OCI-LY7 (cell line): ENCODE measurements at regions of chrX and their contacts with region 1.

Region 1: GRCh38 chrX:2643880-2644279 is 47.2 kb upstream of the CD99 start:
- DNase-seq: no peak
- H3K4me3 ChIP-seq: no peak overlapping the region
- H3K27ac ChIP-seq: no peak overlapping the region
- H3K4me1 ChIP-seq: no peaks in the 10 kb centered on the region
- CTCF ChIP-seq: no peak

Region 2: DNA sequence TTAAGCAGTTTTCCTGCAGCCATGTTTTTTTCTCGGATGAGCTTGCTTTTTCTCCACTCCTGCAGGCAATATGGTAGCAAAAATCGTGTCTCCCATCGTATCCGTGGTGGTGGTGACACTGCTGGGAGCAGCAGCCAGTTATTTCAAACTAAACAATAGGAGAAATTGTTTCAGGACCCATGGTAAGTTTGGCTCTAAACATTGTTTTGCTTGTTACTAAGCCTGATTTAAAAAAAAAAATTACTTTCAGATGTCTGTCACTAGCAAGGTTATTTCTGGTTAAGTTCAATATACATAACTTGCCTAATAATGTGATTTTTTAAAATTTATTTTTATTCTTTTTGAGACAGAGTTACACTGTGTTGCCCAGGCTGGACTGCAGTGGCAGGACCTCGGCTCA is 167.4 kb after region 1 on chrX:
- CTCF ChIA-PET with region 1: no interaction called
- POLR2A ChIA-PET with region 1: no interaction called
- intact Hi-C with region 1: loop called (anchors 1 kb)
- DNase-seq: no peak
- H3K4me3 ChIP-seq: no peak overlapping the region
- H3K27ac ChIP-seq: no peak overlapping the region
- H3K4me1 ChIP-seq: no peaks in the 10 kb centered on the region
- CTCF ChIP-seq: no peak